ENCODE measurements at regions of chr12 and their contacts with region 1.

Region 1: GRCh38 chr12:14960548-14961465 is 594 bp downstream of the ARHGDIB start:
- DNase-seq: peak in 7 of 9 donors; percentile 41 to 82 (median 77)
- ATAC-seq: peak; percentile 54
- H3K4me3 ChIP-seq: peak overlapping the region; percentile 84
- H3K4me3 Mint-ChIP-seq: peak overlapping the region; percentile 88 to 100 (median 97)
- H3K27ac ChIP-seq: peak overlapping the region; percentile 96
- H3K27ac Mint-ChIP-seq: peak overlapping the region; percentile 94 to 100 (median 97)
- H3K4me1 ChIP-seq: peaks cover 42 to 50% of the 10 kb centered on the region in 2 donors
- H3K4me1 Mint-ChIP-seq: peaks cover 42 to 68% (median 61%) of the 10 kb centered on the region in 7 donors
- H3K27me3 ChIP-seq: no peaks in the 10 kb centered on the region
- H3K27me3 Mint-ChIP-seq: peaks cover 0 to 2% (median 0%) of the 10 kb centered on the region in 5 donors

Region 2: DNA sequence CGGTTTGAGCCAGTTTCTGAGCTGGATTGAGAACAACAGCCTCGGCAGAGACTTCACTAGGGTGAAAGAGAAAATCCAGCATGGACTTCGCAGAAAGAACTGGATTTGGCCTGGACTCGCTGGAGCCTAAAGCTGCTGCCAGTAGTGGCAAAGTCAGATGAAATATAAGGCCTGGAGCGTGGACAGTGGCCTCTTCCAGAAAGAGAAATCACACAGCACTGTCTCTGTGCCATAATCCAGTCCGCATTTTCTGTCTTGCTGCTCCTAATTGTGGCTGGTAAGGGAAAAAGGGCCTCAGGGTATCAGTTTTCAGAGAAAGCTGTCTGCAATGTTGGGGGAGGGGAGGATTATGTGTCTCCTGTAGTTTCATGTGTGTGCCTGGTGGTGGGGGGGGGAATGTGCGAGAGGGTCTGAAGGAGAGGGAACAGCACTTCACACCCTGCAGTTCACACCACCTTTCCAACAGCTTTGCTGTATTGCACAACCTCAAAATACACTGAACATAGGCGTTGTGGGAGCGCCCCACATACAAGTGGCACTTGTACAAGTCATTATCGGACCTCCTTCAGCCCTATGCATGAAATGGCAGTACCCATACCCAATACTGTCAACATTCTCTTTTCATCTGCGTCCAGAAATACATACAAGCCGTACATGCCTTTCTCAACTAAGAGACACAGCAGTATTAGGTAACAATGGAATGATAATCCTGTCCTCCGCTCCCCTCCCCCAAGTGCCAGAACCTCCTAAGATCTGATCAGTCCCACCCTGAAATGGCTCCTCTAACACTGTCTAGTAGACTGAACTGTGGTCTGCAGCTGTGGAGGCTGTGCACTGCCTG is 702.9 kb before region 1 on chr12:
- CTCF ChIA-PET with region 1: no interaction called
- POLR2A ChIA-PET with region 1: no interaction called
- intact Hi-C with region 1: loop called (anchors 1 kb)
- DNase-seq: peak; percentile 49 to 85 (median 79)
- ATAC-seq: peak; percentile 72
- H3K4me3 ChIP-seq: peak overlapping the region; percentile 31
- H3K4me3 Mint-ChIP-seq: peak overlapping the region; percentile 67 to 81 (median 77)
- H3K27ac ChIP-seq: peak overlapping the region; percentile 65
- H3K27ac Mint-ChIP-seq: peak overlapping the region; percentile 89 to 99 (median 98)
- H3K4me1 ChIP-seq: peaks cover 37 to 38% of the 10 kb centered on the region in 2 donors
- H3K4me1 Mint-ChIP-seq: peaks cover 39 to 66% (median 61%) of the 10 kb centered on the region in 7 donors
- H3K27me3 ChIP-seq: no peaks in the 10 kb centered on the region
- H3K27me3 Mint-ChIP-seq: no peaks in the 10 kb centered on the region

Region 3: GRCh38 chr12:14678547-14679150 is 282.2 kb before region 1 on chr12:
- CTCF ChIA-PET with region 1: no interaction called
- POLR2A ChIA-PET with region 1: no interaction called
- intact Hi-C with region 1: no loop called
- DNase-seq: no peak
- ATAC-seq: no peak
- H3K4me3 ChIP-seq: no peak overlapping the region
- H3K4me3 Mint-ChIP-seq: no peak overlapping the region
- H3K27ac ChIP-seq: no peak overlapping the region
- H3K27ac Mint-ChIP-seq: no peak overlapping the region
- H3K4me1 ChIP-seq: no peaks in the 10 kb centered on the region
- H3K4me1 Mint-ChIP-seq: peaks cover 0 to 4% (median 0%) of the 10 kb centered on the region in 7 donors
- H3K27me3 ChIP-seq: peaks cover 0 to 2% of the 10 kb centered on the region in 2 donors
- H3K27me3 Mint-ChIP-seq: peaks cover 0 to 23% (median 16%) of the 10 kb centered on the region in 5 donors

Region 4: DNA sequence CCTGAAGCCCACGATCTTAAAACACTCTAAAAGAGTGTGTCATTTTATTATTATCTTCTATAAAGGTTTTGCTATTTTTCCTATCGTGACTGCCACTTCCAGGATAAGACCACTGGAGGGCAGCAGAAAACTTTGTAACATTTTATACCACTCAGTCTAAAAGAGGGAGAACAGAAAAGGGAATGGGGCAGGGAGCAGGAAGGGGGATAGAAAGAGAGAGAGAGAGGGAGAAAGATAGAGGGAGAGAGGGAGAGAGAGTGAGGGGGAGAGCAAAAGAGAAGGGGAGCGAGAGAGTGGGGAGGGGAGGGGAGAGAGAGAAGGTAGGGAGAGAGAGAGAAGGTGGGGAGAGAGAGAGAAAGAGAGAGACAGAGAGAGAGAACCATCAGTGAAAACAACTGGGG is 115.5 kb before region 1 on chr12:
- CTCF ChIA-PET with region 1: interaction called, 4 read pairs
- POLR2A ChIA-PET with region 1: interaction called, 3 read pairs
- intact Hi-C with region 1: loop called in 1 of 2 experiments (anchors 1 kb)
- DNase-seq: peak in 7 of 9 donors; percentile 23 to 63 (median 59)
- ATAC-seq: peak; percentile 80
- H3K4me3 ChIP-seq: no peak overlapping the region
- H3K4me3 Mint-ChIP-seq: peak overlapping the region in 7 of 10 donors; percentile 1 to 71 (median 27)
- H3K27ac ChIP-seq: no peak overlapping the region
- H3K27ac Mint-ChIP-seq: peak overlapping the region in 6 of 9 donors; percentile 14 to 68 (median 38)
- H3K4me1 ChIP-seq: no peaks in the 10 kb centered on the region
- H3K4me1 Mint-ChIP-seq: peaks cover 5 to 13% (median 8%) of the 10 kb centered on the region in 7 donors
- H3K27me3 ChIP-seq: no peaks in the 10 kb centered on the region
- H3K27me3 Mint-ChIP-seq: peaks cover 0 to 12% (median under 1%) of the 10 kb centered on the region in 5 donors

Region 5: DNA sequence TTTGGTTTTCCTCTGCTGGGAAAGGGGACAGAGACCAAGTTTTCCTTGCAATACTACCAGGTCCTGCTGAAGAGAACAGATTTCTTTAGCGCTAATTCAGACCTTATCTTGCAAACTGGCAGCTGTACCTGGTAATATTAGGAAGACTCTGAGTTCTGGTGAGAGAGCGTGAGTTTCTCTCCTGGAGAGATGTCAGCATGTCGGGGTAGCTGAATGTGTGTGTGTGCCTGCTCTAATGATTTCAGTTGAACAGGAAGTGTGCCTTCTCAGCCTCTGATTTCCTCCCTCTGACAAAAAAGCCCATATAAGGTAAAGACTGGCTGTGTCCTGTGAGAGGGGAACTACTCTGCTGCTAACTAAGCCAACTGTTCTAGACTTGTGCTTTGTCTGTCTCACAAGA is 12.1 kb before region 1 on chr12:
- CTCF ChIA-PET with region 1: no interaction called
- POLR2A ChIA-PET with region 1: interaction called, 115 read pairs
- intact Hi-C with region 1: loop called (anchors 1 kb)
- DNase-seq: peak in 8 of 9 donors; percentile 34 to 87 (median 81)
- ATAC-seq: peak; percentile 88
- H3K4me3 ChIP-seq: peak overlapping the region; percentile 47
- H3K4me3 Mint-ChIP-seq: peak overlapping the region; percentile 72 to 97 (median 90)
- H3K27ac ChIP-seq: peak overlapping the region; percentile 96
- H3K27ac Mint-ChIP-seq: peak overlapping the region; percentile 87 to 99 (median 97)
- H3K4me1 ChIP-seq: peaks cover 77 to 79% of the 10 kb centered on the region in 2 donors
- H3K4me1 Mint-ChIP-seq: peaks cover 69 to 95% (median 91%) of the 10 kb centered on the region in 7 donors
- H3K27me3 ChIP-seq: no peaks in the 10 kb centered on the region
- H3K27me3 Mint-ChIP-seq: no peaks in the 10 kb centered on the region

Region 6: GRCh38 chr12:15546102-15546701 is 585.4 kb after region 1 on chr12:
- CTCF ChIA-PET with region 1: no interaction called
- POLR2A ChIA-PET with region 1: no interaction called
- intact Hi-C with region 1: loop called in 1 of 2 experiments (anchors 2 kb)
- DNase-seq: peak in 7 of 9 donors; percentile 73 to 89 (median 85)
- ATAC-seq: peak; percentile 93
- H3K4me3 ChIP-seq: no peak overlapping the region
- H3K4me3 Mint-ChIP-seq: peak overlapping the region; percentile 36 to 85 (median 76)
- H3K27ac ChIP-seq: peak overlapping the region; percentile 74
- H3K27ac Mint-ChIP-seq: peak overlapping the region; percentile 95 to 100 (median 98)
- H3K4me1 ChIP-seq: peaks cover 0 to 50% of the 10 kb centered on the region in 2 donors
- H3K4me1 Mint-ChIP-seq: peaks cover 30 to 98% (median 86%) of the 10 kb centered on the region in 7 donors
- H3K27me3 ChIP-seq: peaks cover 0 to under 1% of the 10 kb centered on the region in 2 donors
- H3K27me3 Mint-ChIP-seq: no peaks in the 10 kb centered on the region

Region 7: DNA sequence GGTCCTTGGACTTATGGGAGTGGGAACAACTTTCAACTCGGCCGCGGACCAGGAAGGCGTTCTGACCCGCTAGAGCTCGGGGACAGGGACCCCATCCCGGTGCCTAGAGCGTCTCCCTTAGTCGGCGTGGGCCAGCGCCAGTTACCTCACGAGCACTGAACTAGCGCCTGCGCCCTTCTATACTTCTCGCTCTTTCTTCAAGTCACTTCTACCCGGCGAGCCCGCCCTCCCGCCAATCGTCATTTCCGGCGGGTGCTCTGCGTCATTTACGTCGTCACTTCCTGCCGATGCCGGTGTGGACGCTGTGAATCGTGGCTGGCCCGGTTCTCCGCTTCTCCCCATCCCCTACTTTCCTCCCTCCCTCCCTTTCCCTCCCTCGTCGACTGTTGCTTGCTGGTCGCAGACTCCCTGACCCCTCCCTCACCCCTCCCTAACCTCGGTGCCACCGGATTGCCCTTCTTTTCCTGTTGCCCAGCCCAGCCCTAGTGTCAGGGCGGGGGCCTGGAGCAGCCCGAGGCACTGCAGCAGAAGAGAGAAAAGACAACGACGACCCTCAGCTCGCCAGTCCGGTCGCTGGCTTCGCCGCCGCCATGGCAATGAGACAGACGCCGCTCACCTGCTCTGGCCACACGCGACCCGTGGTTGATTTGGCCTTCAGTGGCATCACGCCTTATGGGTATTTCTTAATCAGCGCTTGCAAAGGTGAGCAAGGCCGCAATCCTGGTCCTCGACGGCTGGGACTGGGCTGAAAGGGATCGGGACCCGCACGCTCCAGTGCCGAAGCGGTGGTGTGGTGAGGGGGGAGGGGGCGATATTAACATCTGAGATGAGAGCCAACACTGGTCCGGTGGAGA is 921.5 kb after region 1 on chr12 and contains the start of gene STRAP:
- CTCF ChIA-PET with region 1: no interaction called
- POLR2A ChIA-PET with region 1: no interaction called
- intact Hi-C with region 1: loop called in 1 of 2 experiments (anchors 5 kb)
- DNase-seq: peak; percentile 94 to 98 (median 97)
- ATAC-seq: peak; percentile 97
- H3K4me3 ChIP-seq: peak within 1 kb of the TSS; percentile 97
- H3K4me3 Mint-ChIP-seq: peak within 1 kb of the TSS; percentile 91 to 100 (median 97)
- H3K27ac ChIP-seq: peak within 1 kb of the TSS; percentile 96
- H3K27ac Mint-ChIP-seq: peak within 1 kb of the TSS; percentile 98 to 100 (median 99)
- H3K4me1 ChIP-seq: peaks cover 22 to 32% of the 10 kb centered on the region in 2 donors
- H3K4me1 Mint-ChIP-seq: peaks cover 35 to 66% (median 60%) of the 10 kb centered on the region in 7 donors
- H3K27me3 ChIP-seq: no peaks in the 10 kb centered on the region
- H3K27me3 Mint-ChIP-seq: no peaks in the 10 kb centered on the region
- total RNA-seq, gene STRAP: 42.2 to 97.2 (median 70.9) TPM